ENCODE measurements at regions of chrX and their contacts with region 1.

Region 1: DNA sequence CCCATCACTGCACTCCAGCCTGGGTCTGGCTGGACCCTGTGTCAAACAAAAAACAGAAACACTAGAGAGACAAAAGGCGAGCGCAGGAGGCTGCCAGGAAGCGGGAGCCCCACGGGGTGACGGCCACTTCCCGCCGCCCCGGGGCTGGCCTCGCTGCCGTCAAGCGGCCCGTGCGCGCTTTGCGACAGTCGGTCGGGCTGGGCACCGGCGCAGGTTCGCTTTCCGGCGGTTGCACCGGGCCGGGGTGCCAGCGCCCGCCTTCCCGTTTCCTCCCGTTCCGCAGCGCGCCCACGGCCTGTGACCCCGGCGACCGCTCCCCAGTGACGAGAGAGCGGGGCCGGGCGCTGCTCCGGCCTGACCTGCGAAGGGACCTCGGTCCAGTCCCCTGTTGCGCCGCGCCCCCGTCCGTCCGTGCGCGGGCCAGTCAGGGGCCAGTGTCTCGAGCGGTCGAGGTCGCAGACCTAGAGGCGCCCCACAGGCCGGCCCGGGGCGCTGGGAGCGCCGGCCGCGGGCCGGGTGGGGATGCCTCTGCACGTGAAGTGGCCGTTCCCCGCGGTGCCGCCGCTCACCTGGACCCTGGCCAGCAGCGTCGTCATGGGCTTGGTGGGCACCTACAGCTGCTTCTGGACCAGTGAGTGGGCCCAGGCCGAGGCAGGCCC is at the start of gene TAFAZZIN:
- DNase-seq: peak; percentile 70 to 76 (median 75)
- H3K4me3 ChIP-seq: peak within 1 kb of the TSS; percentile 42 to 51
- H3K4me3 Mint-ChIP-seq: peak within 1 kb of the TSS; percentile 87 to 98 (median 90)
- H3K27ac ChIP-seq: peak within 1 kb of the TSS; percentile 70
- H3K27ac Mint-ChIP-seq: peak within 1 kb of the TSS; percentile 90 to 95 (median 94)
- H3K4me1 ChIP-seq: peaks cover 10% of the 10 kb centered on the region
- H3K4me1 Mint-ChIP-seq: peaks cover 4 to 24% (median 11%) of the 10 kb centered on the region in 4 donors
- H3K27me3 ChIP-seq: no peaks in the 10 kb centered on the region
- H3K27me3 Mint-ChIP-seq: no peaks in the 10 kb centered on the region
- total RNA-seq, gene TAFAZZIN: 139 to 141 TPM

Region 2: GRCh38 chrX:154142950-154143745 is 268.3 kb before region 1 on chrX:
- CTCF ChIA-PET with region 1: no interaction called
- POLR2A ChIA-PET with region 1: no interaction called
- intact Hi-C with region 1: no loop called
- DNase-seq: no peak
- H3K4me3 ChIP-seq: no peak overlapping the region
- H3K4me3 Mint-ChIP-seq: no peak overlapping the region
- H3K27ac ChIP-seq: no peak overlapping the region
- H3K27ac Mint-ChIP-seq: no peak overlapping the region
- H3K4me1 ChIP-seq: peaks cover 7% of the 10 kb centered on the region
- H3K4me1 Mint-ChIP-seq: peaks cover 0 to 12% (median 2%) of the 10 kb centered on the region in 4 donors
- H3K27me3 ChIP-seq: no peaks in the 10 kb centered on the region
- H3K27me3 Mint-ChIP-seq: no peaks in the 10 kb centered on the region

Region 3: DNA sequence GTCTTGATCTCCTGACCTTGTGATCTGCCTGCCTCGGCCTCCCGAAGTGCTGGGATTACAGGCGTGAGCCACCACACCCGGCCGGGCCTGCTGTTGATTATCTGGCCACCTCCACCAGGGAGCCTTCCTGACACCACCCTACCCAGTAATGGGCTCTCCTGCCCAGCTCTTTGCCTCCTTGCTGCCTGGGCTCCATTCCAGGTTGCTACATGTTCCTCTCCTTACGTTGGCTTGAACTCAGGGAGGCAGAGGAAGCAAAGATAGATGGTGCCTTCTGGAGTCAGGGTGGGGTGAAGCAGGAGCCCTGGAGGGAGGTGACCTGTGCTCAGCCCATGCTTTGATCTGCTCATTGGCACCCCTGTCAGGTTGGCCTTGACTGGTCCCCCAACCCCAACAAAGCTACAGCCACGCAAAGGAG is 63.3 kb before region 1 on chrX:
- CTCF ChIA-PET with region 1: no interaction called
- POLR2A ChIA-PET with region 1: no interaction called
- intact Hi-C with region 1: no loop called
- DNase-seq: peak in 3 of 5 donors; percentile 22 to 35 (median 25)
- H3K4me3 ChIP-seq: no peak overlapping the region
- H3K4me3 Mint-ChIP-seq: peak overlapping the region; percentile 6 to 72 (median 45)
- H3K27ac ChIP-seq: no peak overlapping the region
- H3K27ac Mint-ChIP-seq: peak overlapping the region; percentile 77 to 99 (median 90)
- H3K4me1 ChIP-seq: peaks cover 59% of the 10 kb centered on the region
- H3K4me1 Mint-ChIP-seq: peaks cover 15 to 58% (median 37%) of the 10 kb centered on the region in 4 donors
- H3K27me3 ChIP-seq: no peaks in the 10 kb centered on the region
- H3K27me3 Mint-ChIP-seq: no peaks in the 10 kb centered on the region

Region 4: DNA sequence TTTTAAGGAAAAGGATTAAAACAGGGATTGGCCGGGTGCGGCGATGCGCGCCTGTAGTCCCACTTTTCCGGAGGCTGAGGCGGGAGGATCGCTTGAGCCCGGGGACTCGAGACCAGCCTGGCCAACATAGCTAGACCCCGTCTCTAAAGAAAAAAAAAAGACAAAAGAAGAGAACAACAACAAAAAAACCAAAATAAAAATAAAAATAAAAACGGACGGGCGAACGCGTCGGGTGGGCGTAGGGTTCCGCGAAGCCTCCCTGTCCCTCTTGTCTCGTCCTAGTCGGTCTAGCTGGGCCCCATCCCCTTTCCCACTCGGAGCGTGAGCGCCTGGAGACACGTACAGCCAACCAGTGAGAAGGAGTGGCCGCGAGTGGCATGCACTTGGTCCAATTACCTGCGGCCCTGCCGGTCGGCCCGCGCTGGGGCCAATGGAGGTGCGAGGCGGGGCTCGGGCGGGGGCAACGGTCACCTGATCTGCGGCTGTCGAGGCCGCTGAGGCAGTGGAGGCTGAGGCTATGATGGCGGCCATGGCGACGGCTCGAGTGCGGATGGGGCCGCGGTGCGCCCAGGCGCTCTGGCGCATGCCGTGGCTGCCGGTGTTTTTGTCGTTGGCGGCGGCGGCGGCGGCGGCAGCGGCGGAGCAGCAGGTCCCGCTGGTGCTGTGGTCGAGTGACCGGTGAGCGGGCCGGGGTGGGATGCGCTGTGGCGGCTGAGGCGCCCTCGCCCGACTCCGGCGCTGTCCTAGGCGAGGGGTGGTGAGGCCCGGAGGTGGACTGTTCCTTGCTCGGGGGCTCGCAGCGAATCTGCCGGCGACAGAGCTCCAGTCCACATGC is 16.9 kb after region 1 on chrX and contains the start of gene ATP6AP1:
- CTCF ChIA-PET with region 1: interaction called, 3 read pairs
- POLR2A ChIA-PET with region 1: interaction called, 17 read pairs
- intact Hi-C with region 1: no loop called
- DNase-seq: peak; percentile 84 to 89 (median 89)
- H3K4me3 ChIP-seq: peak within 1 kb of the TSS; percentile 61 to 62
- H3K4me3 Mint-ChIP-seq: peak within 1 kb of the TSS; percentile 74 to 89 (median 84)
- H3K27ac ChIP-seq: peak within 1 kb of the TSS; percentile 65
- H3K27ac Mint-ChIP-seq: peak within 1 kb of the TSS; percentile 72 to 93 (median 86)
- H3K4me1 ChIP-seq: peaks cover 28% of the 10 kb centered on the region
- H3K4me1 Mint-ChIP-seq: peaks cover 13 to 30% (median 23%) of the 10 kb centered on the region in 4 donors
- H3K27me3 ChIP-seq: no peaks in the 10 kb centered on the region
- H3K27me3 Mint-ChIP-seq: no peaks in the 10 kb centered on the region
- total RNA-seq, gene ATP6AP1: 60.4 to 62.6 TPM

Region 5: GRCh38 chrX:154443992-154444754 is 32.7 kb after region 1 on chrX and contains the start of gene FAM50A:
- CTCF ChIA-PET with region 1: no interaction called
- POLR2A ChIA-PET with region 1: interaction called, 17 read pairs
- intact Hi-C with region 1: no loop called
- DNase-seq: peak; percentile 59 to 67 (median 62)
- H3K4me3 ChIP-seq: peak within 1 kb of the TSS; percentile 3 to 45
- H3K4me3 Mint-ChIP-seq: peak within 1 kb of the TSS; percentile 63 to 86 (median 77)
- H3K27ac ChIP-seq: peak within 1 kb of the TSS; percentile 69
- H3K27ac Mint-ChIP-seq: peak within 1 kb of the TSS; percentile 81 to 95 (median 89)
- H3K4me1 ChIP-seq: peaks cover 49% of the 10 kb centered on the region
- H3K4me1 Mint-ChIP-seq: peaks cover 7 to 51% (median 23%) of the 10 kb centered on the region in 4 donors
- H3K27me3 ChIP-seq: no peaks in the 10 kb centered on the region
- H3K27me3 Mint-ChIP-seq: no peaks in the 10 kb centered on the region
- total RNA-seq, gene FAM50A: 65.2 to 70.3 TPM

Region 6: GRCh38 chrX:154478728-154479622 is 67.5 kb after region 1 on chrX and contains the start of gene LAGE3:
- CTCF ChIA-PET with region 1: no interaction called
- POLR2A ChIA-PET with region 1: interaction called, 3 read pairs
- intact Hi-C with region 1: loop called (anchors 10 kb)
- DNase-seq: peak; percentile 89 to 96 (median 94)
- H3K4me3 ChIP-seq: peak within 1 kb of the TSS in 1 of 2 donors; percentile 55
- H3K4me3 Mint-ChIP-seq: peak within 1 kb of the TSS; percentile 78 to 87 (median 83)
- H3K27ac ChIP-seq: peak within 1 kb of the TSS; percentile 76
- H3K27ac Mint-ChIP-seq: peak within 1 kb of the TSS; percentile 87 to 97 (median 91)
- H3K4me1 ChIP-seq: peaks cover 21% of the 10 kb centered on the region
- H3K4me1 Mint-ChIP-seq: peaks cover 5 to 19% (median 10%) of the 10 kb centered on the region in 4 donors
- H3K27me3 ChIP-seq: no peaks in the 10 kb centered on the region
- H3K27me3 Mint-ChIP-seq: no peaks in the 10 kb centered on the region
- total RNA-seq, gene LAGE3: 18.5 to 19.3 TPM

Measured in CD4-positive, alpha-beta memory T cell (primary cell).